Colonic mucosa (tissue), 4 donors: ENCODE measurements at regions of chr19 and their contacts with region 1.

Region 1: DNA sequence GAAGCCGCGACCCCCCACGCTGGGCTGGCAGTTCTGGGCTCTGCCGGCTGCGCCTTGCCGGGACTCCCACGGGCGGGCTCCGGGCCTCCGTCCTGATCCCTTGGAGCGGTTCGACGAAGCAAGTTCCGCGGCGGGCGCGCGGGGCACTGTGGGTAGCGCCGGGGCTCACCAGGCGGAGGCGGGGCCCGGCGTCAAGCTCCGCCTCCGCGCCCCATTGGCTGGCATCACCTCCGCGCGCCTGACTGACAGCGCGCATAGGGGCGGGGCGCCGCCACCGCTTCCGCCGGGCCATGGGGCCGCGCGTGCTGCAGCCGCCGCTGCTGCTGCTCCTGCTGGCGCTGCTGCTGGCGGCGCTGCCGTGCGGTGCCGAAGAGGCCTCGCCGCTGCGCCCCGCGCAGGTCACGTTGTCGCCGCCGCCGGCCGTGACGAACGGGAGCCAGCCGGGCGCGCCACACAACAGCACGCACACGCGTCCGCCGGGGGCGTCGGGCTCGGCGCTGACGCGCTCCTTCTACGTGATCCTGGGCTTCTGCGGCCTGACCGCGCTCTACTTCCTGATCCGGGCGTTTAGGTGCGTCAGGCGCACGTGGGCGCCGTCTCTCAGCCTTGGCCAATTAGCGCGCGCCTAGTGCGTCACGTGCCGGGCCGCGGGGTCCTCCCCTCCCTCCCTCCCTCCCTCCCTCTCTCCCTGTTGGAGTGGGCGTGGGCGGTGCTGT is at the start of gene FAM174C:
- DNase-seq: peak; percentile 96
- H3K4me3 ChIP-seq: peak within 1 kb of the TSS; percentile 67
- H3K27ac ChIP-seq: peak within 1 kb of the TSS; percentile 99
- H3K4me1 ChIP-seq: peaks cover 43% of the 10 kb centered on the region
- H3K27me3 ChIP-seq: no peaks in the 10 kb centered on the region
- CTCF ChIP-seq: no peak
- total RNA-seq, gene FAM174C: 41.8 to 114 TPM

Region 2: DNA sequence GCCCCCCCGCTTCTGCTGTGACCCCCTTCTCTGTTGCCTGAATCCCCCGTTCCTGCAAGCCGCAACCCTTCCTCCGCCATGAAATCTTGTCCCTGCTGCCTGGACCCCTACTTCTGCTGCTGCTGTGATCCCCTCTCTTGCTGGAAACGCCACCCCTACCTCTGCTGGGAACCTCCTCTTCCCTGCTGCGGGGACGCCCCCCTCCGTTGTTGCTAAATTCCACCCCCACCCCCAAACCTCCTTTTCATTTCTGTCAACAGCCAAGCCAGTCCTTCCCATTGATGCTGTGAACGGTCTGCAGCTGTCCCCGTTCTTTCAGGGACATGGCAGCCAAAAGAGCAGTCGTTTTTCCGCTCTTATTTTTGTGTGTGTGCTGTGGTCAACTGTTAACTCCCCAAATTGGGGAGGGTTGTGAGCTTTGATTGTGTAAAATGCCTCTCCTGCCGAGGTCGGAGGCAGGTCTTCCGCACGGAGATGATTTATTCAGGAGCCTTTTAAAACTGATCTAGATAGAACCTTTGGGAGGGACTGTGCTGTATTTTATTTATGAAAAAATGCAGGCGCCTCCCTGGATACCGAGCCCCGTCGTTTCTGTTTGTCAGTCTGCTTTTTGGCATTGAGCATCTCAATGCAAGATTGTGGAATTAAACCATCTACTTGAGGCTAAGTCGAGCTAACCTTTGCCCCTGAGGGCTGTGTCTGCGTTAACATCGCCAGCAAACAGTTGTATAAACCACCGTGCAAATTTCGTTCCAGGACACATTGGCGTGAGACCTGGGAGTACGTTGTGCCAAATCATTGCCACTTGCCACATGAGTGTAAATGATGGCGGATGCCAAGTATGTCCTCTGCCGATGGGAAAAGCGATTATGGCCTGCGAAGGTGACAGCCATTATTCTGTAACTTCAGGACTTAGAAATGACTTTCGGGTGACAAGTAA is 80.4 kb after region 1 on chr19:
- intact Hi-C with region 1: loop called (anchors 5 kb)
- DNase-seq: peak; percentile 64
- H3K4me3 ChIP-seq: peak overlapping the region; percentile 86
- H3K27ac ChIP-seq: peak overlapping the region; percentile 13
- H3K4me1 ChIP-seq: no peaks in the 10 kb centered on the region
- H3K27me3 ChIP-seq: no peaks in the 10 kb centered on the region
- CTCF ChIP-seq: no peak

Region 3: DNA sequence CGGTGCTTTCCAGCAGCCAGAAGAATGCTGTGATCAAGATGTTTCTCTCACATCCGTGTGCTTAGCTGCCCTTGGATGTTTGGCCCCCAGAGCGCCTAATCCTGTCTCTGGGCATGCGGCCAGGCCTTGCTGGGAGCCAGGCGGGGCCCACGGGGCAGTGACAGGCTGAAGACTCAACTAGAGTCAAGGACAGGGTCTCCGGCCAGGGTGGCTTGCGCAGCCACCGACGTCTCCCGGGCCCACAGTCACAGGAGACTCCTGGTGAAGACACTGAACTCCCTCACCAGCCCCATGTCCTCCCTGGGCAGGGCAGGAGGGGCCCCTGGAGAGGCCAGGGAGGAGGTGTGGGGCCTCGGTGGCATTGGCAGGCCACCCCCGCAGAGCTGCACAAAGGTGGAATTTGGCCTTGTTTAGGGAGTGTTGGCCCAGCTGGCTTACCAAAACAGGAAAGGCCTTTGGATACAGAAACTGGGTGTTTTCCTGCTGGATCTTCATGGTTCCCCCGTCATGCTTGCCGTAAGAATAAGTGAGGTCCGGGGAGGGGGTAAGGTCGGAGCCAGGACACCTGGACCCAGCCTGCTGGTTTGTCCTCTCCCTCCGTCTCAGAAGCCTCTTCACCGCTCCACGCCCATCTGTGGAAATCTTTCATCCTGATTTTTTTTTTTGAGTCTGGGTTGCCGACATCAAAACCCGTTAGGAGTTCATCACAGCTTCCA is 98.3 kb after region 1 on chr19:
- intact Hi-C with region 1: loop called (anchors 5 kb)
- DNase-seq: no peak
- H3K4me3 ChIP-seq: no peak overlapping the region
- H3K27ac ChIP-seq: no peak overlapping the region
- H3K4me1 ChIP-seq: no peaks in the 10 kb centered on the region
- H3K27me3 ChIP-seq: no peaks in the 10 kb centered on the region
- CTCF ChIP-seq: no peak

Region 4: DNA sequence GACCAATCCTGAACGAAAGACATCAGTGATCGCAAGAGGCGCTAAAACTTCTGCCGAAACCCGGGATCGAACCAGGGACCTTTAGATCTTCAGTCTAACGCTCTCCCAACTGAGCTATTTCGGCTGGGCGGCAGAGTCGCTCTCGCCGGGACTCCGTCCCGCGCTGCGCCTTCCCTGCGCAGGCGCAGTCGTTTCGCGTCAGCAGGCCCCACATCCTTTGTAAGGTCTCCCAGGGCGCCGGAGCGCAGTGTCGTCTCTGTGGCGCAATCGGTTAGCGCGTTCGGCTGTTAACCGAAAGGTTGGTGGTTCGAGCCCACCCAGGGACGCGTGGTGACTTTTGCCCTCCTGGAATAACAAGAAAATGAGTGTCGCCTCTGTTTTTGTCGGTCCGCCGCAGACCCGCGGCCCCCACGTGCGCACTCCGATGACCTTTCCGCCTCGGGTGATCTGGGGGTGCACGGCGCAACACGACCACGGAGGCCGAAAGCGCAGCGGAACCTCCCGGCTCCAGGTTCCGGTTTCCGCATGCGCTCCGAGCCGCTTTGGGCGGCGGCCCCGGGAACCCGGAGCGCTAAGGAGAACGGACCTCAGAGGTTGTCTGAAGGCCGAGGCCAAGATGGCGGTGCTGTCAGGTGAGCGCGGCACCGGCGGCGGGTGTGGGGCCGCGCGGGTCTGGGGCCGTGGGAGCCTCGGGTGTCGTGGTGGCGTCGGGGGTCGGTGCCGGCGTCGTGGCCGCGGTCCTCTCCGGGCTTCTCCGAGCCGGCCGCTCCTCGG is 108.1 kb after region 1 on chr19 and contains the start of gene NDUFS7:
- intact Hi-C with region 1: loop called (anchors 5 kb)
- DNase-seq: peak; percentile 90
- H3K4me3 ChIP-seq: peak within 1 kb of the TSS; percentile 99
- H3K27ac ChIP-seq: peak within 1 kb of the TSS; percentile 78
- H3K4me1 ChIP-seq: peaks cover 6% of the 10 kb centered on the region
- H3K27me3 ChIP-seq: no peaks in the 10 kb centered on the region
- CTCF ChIP-seq: no peak
- total RNA-seq, gene NDUFS7: 192 to 244 TPM

Region 5: DNA sequence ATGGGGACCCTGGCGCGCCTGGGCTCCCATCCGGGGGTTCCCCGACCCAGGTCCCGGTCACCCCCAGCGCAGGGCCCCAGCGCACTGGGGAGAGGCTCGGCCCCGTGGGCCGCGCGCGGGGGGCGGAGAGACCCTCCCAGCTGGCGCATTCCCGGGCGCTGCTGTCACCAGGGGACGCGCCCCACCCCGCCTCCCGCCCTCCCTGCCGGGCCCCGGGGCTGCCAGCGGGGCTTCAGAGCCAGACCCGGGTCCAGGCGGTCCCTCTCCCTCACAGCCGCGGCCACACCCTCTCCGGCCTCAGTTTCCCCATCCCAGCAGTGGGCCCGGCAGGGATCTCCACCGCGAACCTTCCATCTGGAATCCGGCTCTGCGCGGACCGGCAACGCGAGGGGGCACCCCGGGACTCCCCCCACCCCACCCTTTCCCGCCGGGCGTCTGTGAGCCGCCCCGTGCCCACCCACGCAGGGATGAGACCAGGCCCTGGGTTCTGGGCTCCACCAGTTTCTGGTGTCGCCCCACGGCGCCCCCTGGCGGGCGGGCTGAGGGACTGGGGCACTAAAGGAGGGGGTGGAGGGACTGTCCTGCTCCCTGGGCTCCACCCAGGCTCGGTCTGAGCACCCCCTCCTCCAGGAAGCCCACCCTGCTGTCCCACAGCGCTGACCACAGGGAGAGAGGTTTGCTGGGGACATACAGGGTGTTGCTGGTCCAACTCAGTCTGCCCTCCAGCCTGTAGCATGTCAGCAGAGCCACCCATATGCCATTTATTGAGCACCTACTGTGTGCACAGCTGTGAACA is 238.3 kb after region 1 on chr19:
- intact Hi-C with region 1: loop called (anchors 10 kb)
- DNase-seq: peak; percentile 63
- H3K4me3 ChIP-seq: peak overlapping the region; percentile 59
- H3K27ac ChIP-seq: no peak overlapping the region
- H3K4me1 ChIP-seq: no peaks in the 10 kb centered on the region
- H3K27me3 ChIP-seq: peaks cover 4% of the 10 kb centered on the region
- CTCF ChIP-seq: peak; percentile 66